ENCODE measurements at regions of chr22 and their contacts with region 1.

Region 1: GRCh38 chr22:38114484-38115398 is 4.3 kb upstream of the BAIAP2L2 start:
- DNase-seq: peak; percentile 74 to 90 (median 85)
- H3K4me3 ChIP-seq: no peak overlapping the region
- H3K27ac ChIP-seq: no peak overlapping the region
- H3K4me1 ChIP-seq: no peaks in the 10 kb centered on the region
- H3K27me3 ChIP-seq: no peaks in the 10 kb centered on the region
- CTCF ChIP-seq: peak; percentile 74 to 89 (median 78)
- EP300 ChIP-seq: no peak
- POLR2A ChIP-seq: no peak

Region 2: DNA sequence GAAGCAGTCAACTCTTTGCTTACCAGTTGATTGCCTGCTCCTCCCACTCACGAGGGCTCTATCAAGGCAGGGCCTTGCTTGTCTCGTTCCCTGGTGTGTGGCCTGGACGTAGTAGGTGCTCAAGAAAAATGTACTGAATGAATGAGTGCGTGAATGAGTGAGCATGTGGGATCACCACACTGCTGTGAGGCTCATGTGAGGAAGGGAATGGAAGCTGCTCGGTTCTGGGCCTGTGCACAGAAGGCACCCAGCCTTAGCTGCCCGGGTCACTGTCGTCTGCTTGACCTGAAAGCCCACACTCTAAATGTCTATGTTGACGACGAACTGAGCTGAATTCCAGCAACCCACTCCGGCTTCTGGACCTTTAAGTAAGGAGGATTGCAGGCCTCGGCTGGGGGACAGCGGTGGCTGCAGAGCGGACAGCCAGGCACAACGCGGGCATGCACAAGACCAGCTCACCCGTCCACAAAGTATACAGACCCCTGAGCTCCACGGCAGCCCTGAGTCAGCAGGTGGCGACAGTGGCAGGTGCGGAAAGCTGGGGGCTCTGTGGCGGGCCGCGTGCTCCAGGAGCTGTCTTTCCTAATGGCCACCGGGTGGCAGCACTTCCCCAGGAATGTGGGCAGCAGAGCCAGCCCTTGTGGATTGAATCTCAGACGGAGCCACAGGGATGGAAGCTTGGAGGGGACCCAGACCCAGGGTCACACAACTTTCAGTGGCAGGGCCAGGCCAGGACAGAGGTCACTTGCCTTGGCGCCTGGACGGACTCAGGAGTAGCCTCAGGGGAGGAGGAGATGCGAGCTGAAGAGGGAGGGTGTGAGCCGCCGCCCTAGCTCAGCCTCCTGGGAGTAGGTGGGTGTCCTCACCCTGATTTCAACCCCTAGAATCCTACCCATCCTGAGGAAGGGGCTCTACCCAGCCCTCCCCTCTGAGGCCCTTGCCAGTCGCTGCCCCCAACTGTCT is 62.6 kb before region 1 on chr22:
- intact Hi-C with region 1: loop called in 1 of 4 experiments (anchors 10 kb)
- DNase-seq: peak; percentile 67 to 87 (median 81)
- H3K4me3 ChIP-seq: no peak overlapping the region
- H3K27ac ChIP-seq: no peak overlapping the region
- H3K4me1 ChIP-seq: peaks cover 6% of the 10 kb centered on the region
- H3K27me3 ChIP-seq: no peaks in the 10 kb centered on the region
- CTCF ChIP-seq: peak; percentile 43 to 94 (median 89)
- EP300 ChIP-seq: no peak
- POLR2A ChIP-seq: no peak

Measured in ovary (tissue), 10 donors.